ENCODE measurements at regions of chr5 and their contacts with region 1.

Region 1: GRCh38 chr5:128201065-128201926 is 117.7 kb downstream of the SLC12A2 start:
- ATAC-seq: peak; percentile 85 to 96 (median 90)
- H3K4me3 ChIP-seq: peak overlapping the region in 2 of 5 donors; percentile 12 to 21
- H3K27ac ChIP-seq: no peak overlapping the region
- H3K4me1 ChIP-seq: no peaks in the 10 kb centered on the region

Region 2: DNA sequence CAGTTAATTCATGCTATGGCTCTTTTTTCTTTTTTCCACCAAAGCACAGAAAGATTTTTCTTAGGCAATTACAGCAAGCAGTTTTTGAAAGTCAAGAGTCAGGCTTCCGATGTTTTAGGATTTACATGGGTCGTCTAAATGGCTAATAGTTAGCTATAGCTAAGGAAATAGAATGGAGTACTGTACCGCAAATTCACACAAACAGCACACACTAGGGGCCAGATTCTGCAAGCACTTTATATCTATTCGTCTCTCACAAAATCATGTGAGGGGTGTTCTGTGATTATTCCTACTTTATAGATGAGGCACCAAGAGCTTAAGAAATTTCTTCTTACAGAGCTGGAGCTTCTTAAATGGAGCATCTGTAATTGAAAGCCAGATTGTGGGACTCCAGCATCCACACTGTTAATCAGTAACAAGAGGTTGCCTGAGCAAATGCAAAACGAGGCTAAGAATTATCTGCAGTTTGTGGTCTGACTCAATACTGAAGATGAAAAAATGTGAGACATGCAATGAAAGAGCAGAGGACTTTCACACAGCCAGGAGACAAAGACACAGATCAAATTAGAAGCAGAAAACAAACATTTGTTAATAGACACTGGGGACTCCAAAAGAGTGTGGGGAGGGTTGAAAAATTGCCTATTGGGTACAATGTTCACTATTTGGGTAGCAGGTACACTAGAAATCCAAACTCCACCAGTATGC is 615.1 kb before region 1 on chr5:
- in situ Hi-C with region 1: loop called in 1 of 9 experiments (anchors 25 kb)
- ATAC-seq: peak in 6 of 8 experiments; percentile 21 to 91 (median 68)
- H3K4me3 ChIP-seq: no peak overlapping the region
- H3K27ac ChIP-seq: peak overlapping the region in 1 of 2 donors; percentile 57
- H3K4me1 ChIP-seq: peaks cover 11 to 32% of the 10 kb centered on the region in 2 donors

Region 3: DNA sequence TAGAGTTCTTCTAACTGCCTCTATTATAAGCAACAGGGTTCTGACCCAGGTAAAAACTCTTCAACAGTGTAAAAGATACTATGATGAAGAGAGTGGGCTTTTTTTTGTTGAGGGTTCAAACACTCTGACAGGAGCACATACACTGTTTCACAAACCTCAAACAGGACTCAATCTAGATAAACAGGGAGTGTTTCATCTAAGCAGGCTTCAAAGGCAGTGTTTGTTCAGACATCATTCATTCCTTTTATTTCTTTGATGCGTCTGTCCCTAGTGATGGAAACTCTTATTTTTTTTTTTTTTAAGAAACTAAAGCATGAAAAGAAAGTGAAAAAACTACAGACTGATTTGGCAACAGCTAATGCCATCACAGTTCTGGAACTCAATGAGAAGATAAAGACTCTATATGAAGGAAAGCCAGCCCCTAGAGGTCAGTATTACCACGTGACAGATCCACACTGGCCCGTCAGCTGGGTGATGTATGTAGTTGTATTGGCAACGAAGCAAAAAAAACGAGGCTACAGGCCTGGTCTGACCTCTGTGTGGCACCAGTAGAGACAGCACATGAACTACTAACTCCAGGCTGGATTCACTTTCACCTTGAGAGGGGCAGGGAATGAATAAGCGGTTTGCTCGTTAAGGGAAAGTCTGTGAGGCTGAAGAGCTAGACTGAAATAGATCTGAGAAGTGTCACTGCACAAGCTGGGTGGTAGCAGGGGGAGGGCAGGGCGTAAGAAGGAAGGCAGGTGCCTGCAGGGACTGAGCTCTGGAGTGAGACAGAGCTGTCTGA is 325.9 kb before region 1 on chr5:
- in situ Hi-C with region 1: loop called in 1 of 9 experiments (anchors 25 kb)
- ATAC-seq: peak; percentile 65 to 97 (median 94)
- H3K4me3 ChIP-seq: peak overlapping the region in 1 of 5 donors; percentile 4
- H3K27ac ChIP-seq: peak overlapping the region in 1 of 2 donors; percentile 45
- H3K4me1 ChIP-seq: peaks cover 30 to 31% of the 10 kb centered on the region in 2 donors

Region 4: DNA sequence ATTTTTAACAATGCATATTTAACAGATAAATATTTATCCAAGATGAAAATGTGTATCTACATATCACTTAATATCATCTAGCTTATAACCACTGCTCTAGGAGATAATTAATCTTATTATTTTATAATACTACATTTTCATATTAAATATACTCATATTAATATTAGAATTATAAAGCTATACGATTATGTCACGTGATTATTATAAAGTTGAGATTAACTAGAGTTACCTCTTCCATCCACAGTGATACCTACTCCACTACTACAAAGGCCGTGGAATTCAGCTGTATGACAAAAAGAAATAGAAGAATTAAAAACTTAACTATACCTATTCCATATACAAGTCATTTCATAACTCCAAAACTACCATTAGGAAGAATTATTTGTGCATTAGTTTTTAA is 164.9 kb after region 1 on chr5:
- in situ Hi-C with region 1: no loop called
- ATAC-seq: no peak
- H3K4me3 ChIP-seq: no peak overlapping the region
- H3K27ac ChIP-seq: no peak overlapping the region
- H3K4me1 ChIP-seq: no peaks in the 10 kb centered on the region

Region 5: DNA sequence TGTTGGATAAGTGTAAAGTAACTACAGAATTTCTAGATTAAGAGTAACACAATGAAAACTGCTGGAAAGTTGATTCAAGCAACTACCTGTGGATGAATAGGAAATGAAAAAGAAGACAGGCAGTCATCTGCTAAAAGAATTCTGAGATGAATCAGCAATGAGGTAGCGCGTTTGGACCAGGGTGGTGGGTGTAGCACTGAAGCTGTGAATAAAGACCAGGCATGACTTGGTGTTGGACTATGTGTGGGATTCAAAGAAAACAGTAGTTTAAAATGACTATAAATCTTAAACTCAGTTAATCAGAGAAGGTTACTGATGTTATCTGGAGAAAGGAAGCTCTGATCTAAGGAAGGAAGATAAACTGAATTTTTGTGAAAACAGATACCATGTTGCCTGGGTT is 176.9 kb after region 1 on chr5:
- in situ Hi-C with region 1: no loop called
- ATAC-seq: peak in 2 of 8 experiments; percentile 69 to 82
- H3K4me3 ChIP-seq: no peak overlapping the region
- H3K27ac ChIP-seq: no peak overlapping the region
- H3K4me1 ChIP-seq: peaks cover 2 to 11% of the 10 kb centered on the region in 2 donors

Region 6: DNA sequence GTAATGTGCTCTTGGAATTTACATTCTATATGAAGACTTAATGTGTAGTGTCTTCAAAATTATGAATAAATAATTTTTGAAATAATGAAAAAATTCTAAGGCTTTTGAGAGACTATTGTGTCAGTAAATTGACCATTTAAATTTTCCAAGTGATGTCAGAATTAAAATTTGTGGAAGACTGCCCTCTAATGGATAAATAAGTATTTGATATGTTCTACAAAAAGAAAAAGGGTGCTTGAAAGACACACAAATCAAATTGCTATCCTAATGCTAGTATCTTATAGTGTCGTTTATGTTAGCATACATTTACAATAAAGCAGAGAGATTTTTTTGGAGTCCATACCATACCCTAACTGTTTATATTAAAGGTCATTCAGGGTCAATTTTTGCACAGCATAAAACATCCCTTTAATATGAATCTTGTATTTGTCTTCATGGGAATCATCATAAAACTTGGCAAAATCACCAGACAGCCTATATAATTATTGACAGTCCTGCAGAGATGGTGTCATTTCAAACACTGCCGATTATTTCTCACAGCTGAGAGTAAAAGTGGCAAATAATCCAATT is 643.1 kb after region 1 on chr5:
- in situ Hi-C with region 1: loop called in 7 of 9 experiments (anchors 25 kb)
- ATAC-seq: no peak
- H3K4me3 ChIP-seq: no peak overlapping the region
- H3K27ac ChIP-seq: no peak overlapping the region
- H3K4me1 ChIP-seq: no peaks in the 10 kb centered on the region